Activated naive CD4-positive, alpha-beta T cell treated with anti-CD3 and anti-CD28 coated beads for 36 hours (primary cell): ENCODE measurements at regions of chr10 and their contacts with region 1.

Region 1: DNA sequence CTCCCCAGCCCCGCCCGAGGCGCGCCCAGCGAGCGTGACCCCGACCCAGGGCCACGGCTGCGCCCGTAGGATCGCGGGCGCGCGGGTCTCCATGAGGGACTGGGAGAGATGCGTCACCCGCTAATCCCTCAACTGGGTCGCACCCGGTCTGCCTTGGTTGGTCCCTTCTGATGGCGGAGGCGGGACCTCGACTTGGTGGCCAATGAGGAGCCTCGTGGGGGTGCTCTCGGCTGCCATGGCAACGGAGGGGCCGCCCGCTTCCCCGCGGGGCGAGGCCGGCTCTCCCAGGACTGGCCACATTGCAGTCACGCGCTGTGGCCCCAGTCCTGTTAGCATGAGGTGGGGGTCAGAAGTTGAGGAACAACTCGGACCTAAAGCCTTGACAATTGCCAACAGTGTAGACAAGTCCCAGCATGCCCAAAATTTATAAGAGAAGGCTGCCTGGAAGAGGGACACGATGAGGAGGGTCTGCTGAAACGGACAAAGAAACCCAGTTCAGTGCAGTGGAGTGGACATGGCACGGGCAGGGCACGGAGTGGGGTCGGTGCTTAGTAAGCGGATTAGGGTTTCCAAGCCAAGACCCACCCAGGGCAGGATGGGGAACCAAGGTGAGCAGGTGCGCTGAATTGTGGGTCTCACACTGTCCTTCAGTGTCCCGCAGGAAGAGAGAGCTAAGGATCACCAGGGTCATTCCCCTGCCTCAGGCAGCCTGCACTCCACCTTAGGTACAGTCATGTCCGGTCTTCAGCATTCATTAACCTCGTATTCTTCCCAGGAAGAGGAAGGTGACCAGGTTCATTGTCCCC is 24.4 kb downstream of the DDIT4 start:
- DNase-seq: peak; percentile 98
- H3K4me3 Mint-ChIP-seq: peak overlapping the region; percentile 89
- H3K27ac Mint-ChIP-seq: peak overlapping the region; percentile 100
- H3K4me1 Mint-ChIP-seq: peaks cover 62% of the 10 kb centered on the region
- H3K27me3 Mint-ChIP-seq: no peaks in the 10 kb centered on the region

Region 2: DNA sequence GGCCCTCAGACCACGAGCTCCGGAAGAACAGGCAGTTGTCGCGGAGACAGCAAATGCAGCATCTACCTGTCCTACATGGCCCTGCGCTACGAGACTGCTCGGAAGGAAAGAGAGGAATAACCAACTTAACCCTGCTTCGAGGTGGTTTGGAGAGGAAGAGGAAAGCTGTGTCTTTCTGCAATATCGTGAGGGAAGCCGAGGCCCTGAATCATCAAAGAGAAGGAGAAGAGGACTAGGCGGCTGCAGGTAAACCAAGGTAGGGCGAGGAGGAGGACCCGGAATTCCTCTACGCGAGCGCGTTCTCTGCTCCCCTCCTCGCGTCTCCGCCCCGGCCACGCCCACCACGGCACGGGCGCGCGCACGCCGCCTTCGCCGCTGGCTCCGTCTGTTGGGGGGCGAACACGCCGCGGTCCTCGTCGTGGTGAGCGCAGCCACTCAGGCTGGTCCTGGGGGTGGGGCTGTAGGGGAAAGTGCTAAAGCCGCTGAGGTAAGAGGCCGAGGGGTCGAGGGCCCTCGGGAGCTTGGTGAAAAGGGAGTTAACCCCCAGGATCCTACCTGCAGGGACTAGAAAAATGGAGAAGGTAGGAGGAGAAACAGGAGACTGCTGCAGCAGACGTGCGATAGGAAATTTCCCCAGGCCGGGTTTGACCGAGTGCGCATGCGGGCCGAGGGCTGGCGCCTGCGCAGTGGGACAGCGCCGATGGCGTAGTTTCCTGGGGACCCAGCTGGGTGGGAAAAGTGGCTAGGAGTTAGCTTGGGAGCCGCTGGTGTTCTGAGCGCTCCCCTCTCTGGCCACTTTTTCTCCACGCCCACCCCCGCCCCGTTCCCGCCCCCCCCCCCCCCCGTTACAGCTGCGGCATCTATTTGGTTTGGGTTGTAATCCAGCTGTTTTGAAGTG is 82.3 kb before region 1 on chr10 and contains the starts of genes ANAPC16 and ASCC1:
- CTCF ChIA-PET with region 1: no interaction called
- intact Hi-C with region 1: loop called (anchors 1 kb)
- DNase-seq: peak; percentile 93
- H3K4me3 Mint-ChIP-seq: peak within 1 kb of the TSS; percentile 91
- H3K27ac Mint-ChIP-seq: peak within 1 kb of the TSS; percentile 98
- H3K4me1 Mint-ChIP-seq: peaks cover 67% of the 10 kb centered on the region
- H3K27me3 Mint-ChIP-seq: no peaks in the 10 kb centered on the region
- total RNA-seq, gene ANAPC16: 127 to 128 TPM
- total RNA-seq, gene ASCC1: 61.6 to 68.5 TPM

Region 3: GRCh38 chr10:72260588-72261322 is 37.4 kb before region 1 on chr10:
- CTCF ChIA-PET with region 1: interaction called, 4 read pairs
- intact Hi-C with region 1: loop called (anchors 1 kb)
- DNase-seq: peak; percentile 94
- H3K4me3 Mint-ChIP-seq: peak overlapping the region; percentile 81
- H3K27ac Mint-ChIP-seq: peak overlapping the region; percentile 99
- H3K4me1 Mint-ChIP-seq: peaks cover 65% of the 10 kb centered on the region
- H3K27me3 Mint-ChIP-seq: no peaks in the 10 kb centered on the region

Region 4: GRCh38 chr10:72285972-72286521 is 12.1 kb before region 1 on chr10:
- CTCF ChIA-PET with region 1: interaction called, 3 read pairs
- intact Hi-C with region 1: loop called (anchors 1 kb)
- DNase-seq: peak; percentile 27
- H3K4me3 Mint-ChIP-seq: no peak overlapping the region
- H3K27ac Mint-ChIP-seq: peak overlapping the region; percentile 19
- H3K4me1 Mint-ChIP-seq: peaks cover 33% of the 10 kb centered on the region
- H3K27me3 Mint-ChIP-seq: no peaks in the 10 kb centered on the region

Region 5: GRCh38 chr10:72319416-72320254 is 21.5 kb after region 1 on chr10:
- CTCF ChIA-PET with region 1: interaction called, 9 read pairs
- intact Hi-C with region 1: loop called (anchors 1 kb)
- DNase-seq: peak; percentile 94
- H3K4me3 Mint-ChIP-seq: peak overlapping the region; percentile 86
- H3K27ac Mint-ChIP-seq: peak overlapping the region; percentile 99
- H3K4me1 Mint-ChIP-seq: peaks cover 79% of the 10 kb centered on the region
- H3K27me3 Mint-ChIP-seq: no peaks in the 10 kb centered on the region